Activated CD4-positive, alpha-beta T cell treated with anti-CD3 and anti-CD28 coated beads for 36 hours (primary cell): ENCODE measurements at regions of chr6 and their contacts with region 1.

Region 1: DNA sequence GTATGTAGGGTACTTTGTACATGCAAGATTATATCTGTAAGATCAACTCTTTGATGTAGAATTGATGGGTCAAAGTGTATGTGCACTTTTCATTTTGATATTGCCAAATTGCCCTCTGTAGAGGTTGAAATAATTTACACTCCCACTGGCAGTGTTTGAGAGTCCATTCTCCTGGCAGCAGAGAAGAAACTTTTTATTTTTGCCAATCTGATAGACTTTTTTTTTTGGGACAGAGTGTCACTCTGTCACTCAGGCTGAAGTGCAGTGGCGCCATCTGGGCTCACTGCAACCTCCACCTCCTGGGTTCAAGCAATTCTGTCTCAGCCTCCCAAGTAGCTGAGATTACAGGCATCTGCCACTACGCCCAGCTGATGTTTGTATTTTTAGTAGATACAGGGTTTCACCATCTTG is 199.2 kb downstream of the ZFAND3 start:
- DNase-seq: peak; percentile 29
- ATAC-seq: no peak
- H3K4me3 Mint-ChIP-seq: no peak overlapping the region
- H3K27ac Mint-ChIP-seq: no peak overlapping the region
- H3K4me1 Mint-ChIP-seq: peaks cover 14% of the 10 kb centered on the region
- H3K27me3 Mint-ChIP-seq: no peaks in the 10 kb centered on the region

Region 2: DNA sequence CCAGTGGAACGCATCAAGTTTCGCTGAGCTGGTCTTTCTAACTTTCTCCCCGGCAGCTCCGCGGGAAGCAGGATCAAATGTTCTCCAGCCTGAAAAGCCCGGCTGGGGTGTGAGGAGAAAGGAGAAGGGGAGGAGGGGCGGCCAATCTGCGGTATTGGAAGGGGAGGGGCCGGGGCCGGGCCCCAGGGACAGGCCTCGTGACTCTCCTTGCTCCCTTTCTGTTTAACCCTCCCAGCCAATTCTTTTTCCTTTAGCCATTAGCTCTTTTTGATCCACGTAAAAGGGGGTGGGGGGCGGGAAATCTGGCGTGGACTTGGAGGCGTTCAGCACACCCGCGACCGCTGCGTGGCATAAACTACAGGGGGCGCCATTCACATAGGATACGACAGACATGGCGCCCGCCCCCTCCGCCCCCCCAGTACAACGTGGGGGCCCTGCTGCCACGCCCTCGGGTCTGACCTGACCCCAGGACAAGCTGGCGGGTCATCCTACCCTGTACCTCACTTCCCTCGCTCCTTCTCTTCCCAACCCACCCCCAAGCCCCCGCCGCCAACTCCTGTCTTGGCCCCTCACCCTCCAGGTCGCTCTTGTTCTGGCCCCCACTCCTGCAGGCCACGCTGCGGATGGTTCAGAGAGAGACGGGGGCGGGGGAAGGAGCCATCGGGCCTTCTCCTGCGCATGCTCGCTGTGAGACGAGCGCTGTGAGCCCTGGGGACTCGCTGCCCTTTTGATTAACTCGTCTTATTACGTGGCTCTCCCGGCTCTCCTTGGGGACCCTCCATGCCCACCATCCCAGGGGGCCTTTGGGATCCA is 313.3 kb before region 1 on chr6:
- CTCF ChIA-PET with region 1: no interaction called
- POLR2A ChIA-PET with region 1: no interaction called
- intact Hi-C with region 1: loop called in 1 of 2 experiments (anchors 5 kb)
- DNase-seq: peak; percentile 81
- ATAC-seq: peak; percentile 85
- H3K4me3 Mint-ChIP-seq: peak overlapping the region; percentile 57
- H3K27ac Mint-ChIP-seq: peak overlapping the region; percentile 10
- H3K4me1 Mint-ChIP-seq: peaks cover 11% of the 10 kb centered on the region
- H3K27me3 Mint-ChIP-seq: peaks cover 6% of the 10 kb centered on the region

Region 3: GRCh38 chr6:38656896-38657295 is 638.1 kb after region 1 on chr6:
- CTCF ChIA-PET with region 1: no interaction called
- POLR2A ChIA-PET with region 1: no interaction called
- intact Hi-C with region 1: no loop called
- DNase-seq: no peak
- ATAC-seq: no peak
- H3K4me3 Mint-ChIP-seq: no peak overlapping the region
- H3K27ac Mint-ChIP-seq: no peak overlapping the region
- H3K4me1 Mint-ChIP-seq: no peaks in the 10 kb centered on the region
- H3K27me3 Mint-ChIP-seq: no peaks in the 10 kb centered on the region